ENCODE measurements at regions of chr1 and their contacts with region 1.

Region 1: DNA sequence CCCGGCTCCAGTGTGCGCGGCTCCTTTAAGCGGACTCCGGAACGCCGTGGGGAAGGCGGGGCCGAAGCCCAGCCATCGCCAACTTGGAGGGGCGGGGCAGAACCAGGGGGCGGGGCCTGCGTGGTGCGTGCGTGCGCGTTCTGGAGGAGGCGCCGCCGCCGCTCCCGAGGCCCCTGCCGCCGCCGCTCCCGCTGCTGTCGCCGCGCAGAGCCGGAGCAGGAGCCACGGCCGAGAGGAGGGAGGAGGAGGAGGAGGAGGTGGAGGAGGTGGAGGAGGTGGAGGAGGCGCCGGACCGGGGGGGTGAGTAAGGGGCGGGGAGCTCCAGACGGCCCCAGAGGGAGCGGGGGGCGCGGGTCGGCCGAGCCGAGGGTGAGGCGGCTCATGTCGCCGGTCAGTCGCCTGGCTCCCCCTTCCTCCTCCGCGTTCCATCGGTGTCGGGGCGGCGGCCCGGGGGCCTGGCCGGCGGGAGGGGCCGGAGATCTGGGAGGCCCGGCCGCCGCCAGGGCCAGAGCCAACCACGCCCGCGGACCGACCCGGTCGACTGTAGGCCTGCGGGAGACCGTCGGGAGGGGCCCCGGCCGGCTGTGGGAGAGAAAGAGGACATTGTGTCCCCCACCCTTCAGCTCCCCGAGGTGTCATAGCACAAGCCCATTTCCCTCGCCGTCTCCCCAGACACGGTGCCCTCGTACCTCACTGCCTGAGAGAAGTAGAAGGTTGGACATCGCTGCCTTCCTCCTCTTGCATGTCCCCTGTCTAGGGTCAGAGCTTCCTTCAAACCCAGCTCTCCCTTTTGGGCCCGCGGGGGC is at the start of gene RAP1A:
- DNase-seq: peak; percentile 87
- H3K4me3 Mint-ChIP-seq: peak within 1 kb of the TSS; percentile 96
- H3K27ac Mint-ChIP-seq: peak within 1 kb of the TSS; percentile 88
- H3K4me1 Mint-ChIP-seq: peaks cover 66% of the 10 kb centered on the region
- H3K27me3 Mint-ChIP-seq: no peaks in the 10 kb centered on the region
- total RNA-seq, gene RAP1A: 219 TPM in 2 replicates

Region 2: DNA sequence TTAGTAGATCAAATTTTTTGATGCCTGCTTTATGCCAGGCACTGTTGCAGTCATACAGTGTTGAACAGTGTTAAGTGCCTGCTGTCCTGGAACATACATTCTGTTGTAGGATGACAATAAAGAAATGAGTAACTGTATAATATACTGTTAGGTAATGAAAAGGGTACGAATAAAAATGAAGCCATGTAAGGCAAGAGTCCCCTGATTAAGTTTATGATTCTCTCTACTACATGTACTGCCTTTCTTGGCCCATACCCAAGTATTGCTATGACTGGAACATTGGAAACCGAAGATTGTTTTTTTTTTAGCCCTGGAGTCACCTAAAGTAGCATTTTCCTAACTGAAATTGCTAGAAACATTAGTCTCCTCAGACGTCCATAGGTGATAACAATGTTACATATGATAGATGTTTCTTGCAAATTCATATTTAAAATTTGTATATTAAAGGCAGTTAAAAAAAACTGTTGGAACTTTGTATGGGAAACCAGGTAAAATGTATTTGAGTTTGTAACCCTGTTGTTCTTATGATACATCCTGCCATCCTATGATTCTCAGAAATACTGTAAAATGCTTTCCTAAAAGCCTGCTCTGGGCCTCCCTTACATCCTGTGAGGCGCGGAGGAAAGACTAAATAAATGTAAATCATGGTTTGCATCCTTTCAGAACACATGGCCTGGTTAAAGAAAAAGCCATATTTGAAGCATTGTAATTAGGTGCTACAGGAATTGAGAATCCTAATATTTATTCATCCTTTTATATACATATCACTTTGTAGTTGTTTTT is 164.8 kb before region 1 on chr1:
- intact Hi-C with region 1: loop called (anchors 5 kb)
- DNase-seq: no peak
- H3K4me3 Mint-ChIP-seq: peak overlapping the region; percentile 9
- H3K27ac Mint-ChIP-seq: peak overlapping the region; percentile 39
- H3K4me1 Mint-ChIP-seq: peaks cover 46% of the 10 kb centered on the region
- H3K27me3 Mint-ChIP-seq: no peaks in the 10 kb centered on the region

Region 3: GRCh38 chr1:111603979-111604378 is 15.9 kb before region 1 on chr1:
- intact Hi-C with region 1: loop called (anchors 1 kb)
- DNase-seq: peak; percentile 82
- H3K4me3 Mint-ChIP-seq: peak overlapping the region; percentile 66
- H3K27ac Mint-ChIP-seq: peak overlapping the region; percentile 97
- H3K4me1 Mint-ChIP-seq: peaks cover 70% of the 10 kb centered on the region
- H3K27me3 Mint-ChIP-seq: no peaks in the 10 kb centered on the region

Region 4: DNA sequence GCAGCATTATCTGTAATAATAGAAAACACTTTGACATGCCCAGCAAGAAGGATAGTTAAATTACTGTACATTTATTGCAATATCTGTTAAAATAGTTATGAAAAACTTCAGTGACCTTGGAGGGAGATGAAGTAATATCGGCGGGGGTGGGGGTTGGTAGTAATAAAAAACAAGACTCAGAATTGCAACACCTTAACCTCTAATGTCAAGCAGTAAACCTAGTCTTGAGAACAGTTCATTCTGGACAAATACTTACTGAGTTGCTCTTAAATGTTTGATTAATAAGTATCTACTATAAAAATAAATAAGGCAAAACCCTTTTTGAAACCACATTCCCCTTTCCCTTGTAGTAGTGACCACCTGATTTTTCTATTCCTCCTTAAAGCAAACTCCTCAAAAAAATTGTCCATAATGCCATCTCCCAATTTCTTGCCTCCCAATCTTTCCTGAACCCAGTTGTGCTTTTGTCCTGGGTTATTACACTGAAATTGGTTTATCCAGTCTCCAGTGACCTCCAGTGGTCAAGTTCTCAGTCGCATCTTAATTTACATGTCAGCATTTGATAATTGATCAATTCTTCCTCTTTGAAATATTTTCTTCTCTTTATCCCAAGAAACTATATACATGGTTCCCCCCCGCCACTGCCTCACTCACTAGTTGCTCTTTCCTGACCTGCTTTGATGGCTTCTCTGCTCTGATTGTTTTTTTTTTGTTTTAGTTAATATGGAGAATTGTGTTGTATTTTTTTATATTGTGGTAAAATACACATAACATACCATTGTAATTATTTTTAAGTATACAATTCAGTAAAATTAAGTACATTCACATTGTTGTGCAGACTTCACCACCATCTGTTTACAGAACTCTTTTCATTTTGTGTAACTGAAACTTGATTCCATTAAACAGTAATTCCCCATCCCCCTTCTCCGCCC is 36.5 kb after region 1 on chr1:
- intact Hi-C with region 1: loop called (anchors 5 kb)
- DNase-seq: no peak
- H3K4me3 Mint-ChIP-seq: no peak overlapping the region
- H3K27ac Mint-ChIP-seq: peak overlapping the region; percentile 44
- H3K4me1 Mint-ChIP-seq: peaks cover 35% of the 10 kb centered on the region
- H3K27me3 Mint-ChIP-seq: no peaks in the 10 kb centered on the region

Measured in activated T-helper 2 cell treated with anti-CD3 and anti-CD28 coated beads, Interferon-gamma antibody, Interleukin-2, Interleukin-4, amounts not matched to agents 10 μg/mL and 5 μg/mL and 100 μg/mL, durations not matched to agents 14 hours and 24 hours and 36 hours (primary cell).